Activated CD8-positive, alpha-beta T cell treated with anti-CD3 and anti-CD28 coated beads, Interleukin-2, amount 10 ng/mL, durations not matched to agents 7 days and 5 days (primary cell): ENCODE measurements at regions of chr3 and their contacts with region 1.

Region 1: DNA sequence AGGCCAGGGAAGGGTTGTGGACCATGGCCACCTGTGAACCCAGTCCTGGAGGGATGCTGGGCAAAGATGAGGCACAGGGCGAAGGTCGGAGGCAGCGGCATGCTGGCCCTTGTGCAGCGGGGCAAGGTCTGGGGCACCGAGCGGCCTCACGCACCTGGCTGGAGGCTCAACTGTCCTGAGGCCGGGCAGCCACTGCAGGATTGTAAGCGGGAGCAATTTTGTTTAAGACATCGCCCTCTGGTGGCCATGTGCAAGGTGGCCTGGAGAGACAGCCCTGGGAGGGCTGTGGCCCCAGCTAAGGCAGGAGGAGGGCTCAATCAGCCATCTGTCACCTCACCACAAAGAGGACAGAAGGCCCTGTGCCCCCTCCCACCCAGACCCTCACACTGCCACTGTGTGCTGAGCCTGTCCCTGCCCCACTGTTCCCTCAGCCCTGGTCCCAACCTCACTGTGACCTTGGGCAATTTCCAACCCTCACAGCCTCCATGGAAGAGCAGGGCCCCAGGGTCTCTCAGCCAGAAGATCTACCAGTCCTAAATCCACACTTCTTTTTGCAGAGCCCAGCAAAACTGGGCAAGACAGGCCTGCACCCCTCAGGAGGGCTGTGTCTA is 46.2 kb downstream of the TPRA1 start:
- DNase-seq: peak; percentile 73
- ATAC-seq: peak; percentile 67
- H3K4me3 Mint-ChIP-seq: no peak overlapping the region
- H3K27ac Mint-ChIP-seq: no peak overlapping the region
- H3K4me1 Mint-ChIP-seq: peaks cover 8% of the 10 kb centered on the region
- H3K27me3 Mint-ChIP-seq: peaks cover 4% of the 10 kb centered on the region

Region 2: GRCh38 chr3:126752303-126752842 is 791.9 kb before region 1 on chr3:
- CTCF ChIA-PET with region 1: interaction called, 11 read pairs
- POLR2A ChIA-PET with region 1: no interaction called
- DNase-seq: peak; percentile 64
- ATAC-seq: peak; percentile 75
- H3K4me3 Mint-ChIP-seq: no peak overlapping the region
- H3K27ac Mint-ChIP-seq: no peak overlapping the region
- H3K4me1 Mint-ChIP-seq: no peaks in the 10 kb centered on the region
- H3K27me3 Mint-ChIP-seq: no peaks in the 10 kb centered on the region

Region 3: GRCh38 chr3:127426444-127427153 is 117.7 kb before region 1 on chr3:
- CTCF ChIA-PET with region 1: no interaction called
- POLR2A ChIA-PET with region 1: no interaction called
- DNase-seq: no peak
- ATAC-seq: no peak
- H3K4me3 Mint-ChIP-seq: no peak overlapping the region
- H3K27ac Mint-ChIP-seq: no peak overlapping the region
- H3K4me1 Mint-ChIP-seq: no peaks in the 10 kb centered on the region
- H3K27me3 Mint-ChIP-seq: peaks cover 22% of the 10 kb centered on the region

Region 4: DNA sequence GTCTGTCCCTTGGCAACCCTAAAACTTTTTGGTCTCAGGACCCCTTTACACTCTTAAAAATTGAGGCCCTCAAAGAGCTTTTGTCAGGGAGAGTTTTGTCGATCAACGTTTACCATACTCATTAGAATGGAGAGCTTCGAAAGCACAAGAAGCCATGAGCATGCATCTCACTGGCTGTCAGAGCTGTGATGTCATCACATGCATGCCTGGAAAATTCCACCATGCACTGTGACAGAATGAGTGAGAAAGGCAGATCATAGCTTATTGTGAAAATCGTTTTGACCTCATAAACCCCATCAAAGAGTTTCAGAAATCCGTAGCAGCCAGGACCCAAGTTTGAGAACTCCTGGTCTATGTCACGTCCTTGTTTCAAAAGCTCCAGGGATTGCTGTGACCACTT is 18.4 kb after region 1 on chr3:
- CTCF ChIA-PET with region 1: interaction called, 11 read pairs
- POLR2A ChIA-PET with region 1: no interaction called
- DNase-seq: no peak
- ATAC-seq: no peak
- H3K4me3 Mint-ChIP-seq: no peak overlapping the region
- H3K27ac Mint-ChIP-seq: no peak overlapping the region
- H3K4me1 Mint-ChIP-seq: peaks cover 8% of the 10 kb centered on the region
- H3K27me3 Mint-ChIP-seq: peaks cover 9% of the 10 kb centered on the region